Caco-2 (cell line): ENCODE measurements at regions of chr5 and their contacts with region 1.

Region 1: GRCh38 chr5:146124580-146124979 is 19.2 kb upstream of the PLAC8L1 start:
- DNase-seq: no peak
- H3K4me3 ChIP-seq: no peak overlapping the region
- H3K4me3 Mint-ChIP-seq: no peak overlapping the region
- H3K27ac Mint-ChIP-seq: no peak overlapping the region
- H3K4me1 ChIP-seq: no peaks in the 10 kb centered on the region
- H3K4me1 Mint-ChIP-seq: no peaks in the 10 kb centered on the region
- H3K27me3 ChIP-seq: no peaks in the 10 kb centered on the region
- H3K27me3 Mint-ChIP-seq: no peaks in the 10 kb centered on the region
- CTCF ChIP-seq: no peak

Region 2: GRCh38 chr5:145903113-145903512 is 221.5 kb before region 1 on chr5:
- CTCF ChIA-PET with region 1: no interaction called
- POLR2A ChIA-PET with region 1: no interaction called
- intact Hi-C with region 1: loop called (anchors 10 kb)
- DNase-seq: peak in 1 of 2 experiments; percentile 20
- H3K4me3 ChIP-seq: no peak overlapping the region
- H3K4me3 Mint-ChIP-seq: no peak overlapping the region
- H3K27ac Mint-ChIP-seq: no peak overlapping the region
- H3K4me1 ChIP-seq: peaks cover 20% of the 10 kb centered on the region; the same call in 1 of the 2 replicates
- H3K4me1 Mint-ChIP-seq: peaks cover 31% of the 10 kb centered on the region
- H3K27me3 ChIP-seq: no peaks in the 10 kb centered on the region
- H3K27me3 Mint-ChIP-seq: no peaks in the 10 kb centered on the region
- CTCF ChIP-seq: peak; percentile 27 to 37

Region 3: DNA sequence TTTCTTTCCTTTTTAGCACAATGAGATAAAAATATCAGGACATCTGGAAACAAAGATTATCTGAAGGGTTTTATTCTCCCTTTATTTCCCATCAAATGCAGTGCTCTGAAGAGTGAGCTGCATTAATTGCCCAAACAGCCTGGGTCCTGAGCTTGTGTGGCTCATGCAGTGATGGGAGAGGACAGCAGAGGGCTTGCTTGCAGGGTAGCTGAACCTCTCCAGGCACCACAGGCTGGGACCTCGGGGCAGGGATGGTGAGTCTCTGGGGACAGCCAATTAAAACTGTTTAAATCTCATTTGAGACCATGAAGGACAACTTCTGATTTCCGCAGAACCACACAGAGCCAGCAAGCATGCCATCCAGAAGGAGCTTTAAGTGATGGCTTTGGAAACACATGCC is 90.5 kb before region 1 on chr5:
- CTCF ChIA-PET with region 1: no interaction called
- POLR2A ChIA-PET with region 1: no interaction called
- intact Hi-C with region 1: no loop called
- DNase-seq: no peak
- H3K4me3 ChIP-seq: no peak overlapping the region
- H3K4me3 Mint-ChIP-seq: no peak overlapping the region
- H3K27ac Mint-ChIP-seq: peak overlapping the region; percentile 24
- H3K4me1 ChIP-seq: peaks cover 39% of the 10 kb centered on the region
- H3K4me1 Mint-ChIP-seq: peaks cover 19% of the 10 kb centered on the region
- H3K27me3 ChIP-seq: no peaks in the 10 kb centered on the region
- H3K27me3 Mint-ChIP-seq: no peaks in the 10 kb centered on the region
- CTCF ChIP-seq: no peak